Endothelial cell of umbilical vein (primary cell): ENCODE measurements at regions of chr2 and their contacts with region 1.

Region 1: DNA sequence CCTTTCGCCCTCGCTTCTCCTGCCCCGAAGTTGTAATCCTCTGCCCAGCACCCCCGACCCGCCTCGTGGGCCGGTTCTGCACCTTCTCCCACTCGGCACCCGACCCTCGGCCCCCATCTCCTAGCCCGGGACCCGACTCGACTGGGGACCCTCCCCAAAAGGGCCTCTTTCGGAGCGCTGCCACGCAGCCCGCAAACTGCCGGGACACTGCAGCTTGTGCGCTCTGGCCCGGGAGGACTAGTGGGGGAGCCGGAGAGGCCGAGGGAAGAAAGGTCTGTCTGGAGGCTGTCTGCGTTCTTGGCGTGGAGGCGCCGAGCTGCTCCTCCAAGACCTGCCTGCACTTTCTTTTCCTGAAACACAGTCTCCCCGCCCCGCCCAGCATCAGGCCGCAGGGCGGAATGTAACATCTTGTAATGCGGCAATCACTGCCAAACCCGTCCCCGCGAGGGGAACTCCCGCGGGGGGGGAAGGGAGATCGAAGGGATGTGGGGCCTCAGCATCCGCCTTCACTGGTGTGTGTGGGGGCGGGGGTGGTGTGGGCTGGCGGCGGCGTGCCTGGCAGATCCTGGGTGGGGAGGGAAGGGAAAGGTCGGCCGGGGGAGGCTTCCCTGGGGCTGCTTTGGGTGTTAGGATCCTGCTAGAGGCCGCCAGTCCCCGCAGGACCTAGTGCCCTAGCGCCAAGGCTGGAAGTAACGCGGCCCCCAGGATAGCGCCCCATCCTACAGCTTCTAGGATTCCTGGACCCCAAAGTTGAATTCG is 7.4 kb downstream of the DLX2 start:
- DNase-seq: peak; percentile 37
- H3K4me3 ChIP-seq: peak overlapping the region in 2 of 3 experiments; percentile 22 to 37
- H3K27ac ChIP-seq: no peak overlapping the region
- H3K4me1 ChIP-seq: peaks cover 31% of the 10 kb centered on the region
- H3K27me3 ChIP-seq: peaks cover 54 to 86% of the 10 kb centered on the region in 2 experiments
- CTCF ChIP-seq: no peak
- POLR2A ChIP-seq: no peak

Region 2: DNA sequence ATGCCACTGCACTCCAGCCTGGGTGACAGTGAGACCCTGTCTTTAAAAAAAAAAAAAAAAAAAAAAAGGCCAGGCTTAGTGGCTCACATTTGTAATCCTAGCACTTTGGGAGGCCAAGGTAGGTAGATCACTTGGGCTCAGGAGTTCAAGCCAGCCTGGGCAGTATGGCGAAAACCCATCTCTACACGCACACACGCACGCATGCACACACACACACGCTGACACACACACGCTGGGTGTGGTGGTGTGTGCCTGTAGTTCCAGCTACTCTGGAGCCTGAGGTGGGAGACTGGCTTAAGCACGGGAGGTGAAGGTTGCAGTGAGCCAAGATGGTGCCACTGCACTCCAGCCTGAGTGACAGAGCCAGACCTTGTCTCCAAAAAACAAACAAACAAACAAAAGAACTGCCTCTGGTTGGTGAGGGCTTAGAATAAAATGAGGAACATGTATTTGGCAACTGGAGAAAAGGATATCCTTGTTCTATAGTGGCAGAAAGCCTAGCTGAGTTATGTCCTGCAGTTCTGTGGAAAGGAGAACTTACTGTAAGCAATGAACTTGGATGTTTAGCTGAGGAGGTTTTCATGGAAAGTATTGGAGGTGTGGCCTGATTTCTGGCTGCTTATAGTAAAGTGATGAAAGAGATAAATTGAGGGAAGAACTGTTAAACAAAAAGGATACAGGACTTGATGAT is 139.0 kb before region 1 on chr2:
- CTCF ChIA-PET with region 1: no interaction called
- POLR2A ChIA-PET with region 1: no interaction called
- dilution Hi-C with region 1: no loop called
- intact Hi-C with region 1: no loop called
- DNase-seq: no peak
- H3K4me3 ChIP-seq: no peak overlapping the region
- H3K27ac ChIP-seq: no peak overlapping the region
- H3K4me1 ChIP-seq: no peaks in the 10 kb centered on the region
- H3K27me3 ChIP-seq: no peaks in the 10 kb centered on the region
- CTCF ChIP-seq: no peak
- POLR2A ChIP-seq: no peak

Region 3: GRCh38 chr2:171999604-172000469 is 95.5 kb before region 1 on chr2 and contains the start of gene METAP1D:
- CTCF ChIA-PET with region 1: no interaction called
- POLR2A ChIA-PET with region 1: no interaction called
- dilution Hi-C with region 1: no loop called
- intact Hi-C with region 1: no loop called
- DNase-seq: peak; percentile 94
- H3K4me3 ChIP-seq: peak within 1 kb of the TSS; percentile 10 to 93 (median 65)
- H3K27ac ChIP-seq: peak within 1 kb of the TSS; percentile 18
- H3K4me1 ChIP-seq: peaks cover 9% of the 10 kb centered on the region
- H3K27me3 ChIP-seq: peaks cover 8 to 16% of the 10 kb centered on the region in 2 experiments
- CTCF ChIP-seq: no peak
- POLR2A ChIP-seq: peak; percentile 82
- total RNA-seq, gene METAP1D: 8.1 TPM in 2 replicates

Region 4: GRCh38 chr2:172072303-172072702 is 23.0 kb before region 1 on chr2:
- CTCF ChIA-PET with region 1: no interaction called
- POLR2A ChIA-PET with region 1: no interaction called
- dilution Hi-C with region 1: no loop called
- intact Hi-C with region 1: no loop called
- DNase-seq: no peak
- H3K4me3 ChIP-seq: no peak overlapping the region
- H3K27ac ChIP-seq: no peak overlapping the region
- H3K4me1 ChIP-seq: no peaks in the 10 kb centered on the region
- H3K27me3 ChIP-seq: no peaks in the 10 kb centered on the region
- CTCF ChIP-seq: no peak
- POLR2A ChIP-seq: no peak

Region 5: DNA sequence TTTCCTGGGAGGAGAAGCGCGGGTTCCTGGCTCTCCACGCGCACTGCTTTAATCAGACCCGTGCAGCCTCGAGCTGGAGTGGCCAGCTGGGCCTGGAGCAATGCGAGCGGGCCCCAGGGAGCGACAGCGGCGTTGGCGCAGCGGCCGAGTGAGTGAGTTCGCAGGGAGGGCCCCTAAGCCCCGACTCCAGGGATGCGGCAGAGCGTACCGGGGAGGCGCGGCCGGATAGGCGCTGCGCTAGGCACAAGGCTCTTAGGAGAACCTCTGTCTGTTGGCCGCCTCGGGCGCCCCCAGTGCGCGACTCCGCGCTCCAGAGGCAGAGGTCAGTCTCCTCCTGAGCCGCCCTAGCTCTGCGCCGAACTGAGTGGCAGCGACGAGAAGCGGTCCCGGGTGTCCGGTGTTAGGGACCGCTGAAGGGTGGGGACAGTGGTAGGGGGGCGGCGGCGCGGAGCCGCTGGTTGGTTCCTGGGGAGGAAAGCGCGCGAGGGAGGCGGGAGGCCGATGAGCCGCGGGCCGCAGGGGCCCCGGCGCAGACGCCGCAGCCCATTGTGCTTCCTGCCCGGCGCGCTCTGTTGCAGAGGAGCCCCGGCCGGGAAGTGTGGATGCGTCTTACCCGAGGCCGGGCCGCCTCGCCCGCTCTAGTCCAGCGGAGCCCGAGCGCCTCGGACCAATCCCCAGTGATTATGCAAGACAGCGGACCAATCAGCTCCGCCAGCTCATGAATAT is 10.4 kb before region 1 on chr2:
- CTCF ChIA-PET with region 1: interaction called, 12 read pairs
- POLR2A ChIA-PET with region 1: no interaction called
- dilution Hi-C with region 1: no loop called
- intact Hi-C with region 1: loop called (anchors 1 kb)
- DNase-seq: peak; percentile 83
- H3K4me3 ChIP-seq: peak overlapping the region; percentile 26 to 40 (median 30)
- H3K27ac ChIP-seq: no peak overlapping the region
- H3K4me1 ChIP-seq: peaks cover 20% of the 10 kb centered on the region
- H3K27me3 ChIP-seq: peaks cover 92 to 100% of the 10 kb centered on the region in 2 experiments
- CTCF ChIP-seq: no peak
- POLR2A ChIP-seq: no peak